Transverse colon (tissue), 4 donors: ENCODE measurements at regions of chr9 and their contacts with region 1.

Region 1: GRCh38 chr9:82829818-82830217 is 233.1 kb downstream of the RASEF start:
- DNase-seq: no peak
- H3K4me3 ChIP-seq: no peak overlapping the region
- H3K27ac ChIP-seq: no peak overlapping the region
- H3K4me1 ChIP-seq: peaks cover 0 to 3% (median 0%) of the 10 kb centered on the region in 4 donors
- H3K27me3 ChIP-seq: no peaks in the 10 kb centered on the region
- CTCF ChIP-seq: no peak
- EP300 ChIP-seq: no peak
- POLR2A ChIP-seq: no peak

Region 2: GRCh38 chr9:82777366-82777765 is 52.5 kb before region 1 on chr9:
- in situ Hi-C with region 1: no loop called
- intact Hi-C with region 1: no loop called
- DNase-seq: no peak
- H3K4me3 ChIP-seq: no peak overlapping the region
- H3K27ac ChIP-seq: no peak overlapping the region
- H3K4me1 ChIP-seq: peaks cover 0 to 8% (median 2%) of the 10 kb centered on the region in 4 donors
- H3K27me3 ChIP-seq: no peaks in the 10 kb centered on the region
- CTCF ChIP-seq: no peak
- EP300 ChIP-seq: no peak
- POLR2A ChIP-seq: no peak

Region 3: DNA sequence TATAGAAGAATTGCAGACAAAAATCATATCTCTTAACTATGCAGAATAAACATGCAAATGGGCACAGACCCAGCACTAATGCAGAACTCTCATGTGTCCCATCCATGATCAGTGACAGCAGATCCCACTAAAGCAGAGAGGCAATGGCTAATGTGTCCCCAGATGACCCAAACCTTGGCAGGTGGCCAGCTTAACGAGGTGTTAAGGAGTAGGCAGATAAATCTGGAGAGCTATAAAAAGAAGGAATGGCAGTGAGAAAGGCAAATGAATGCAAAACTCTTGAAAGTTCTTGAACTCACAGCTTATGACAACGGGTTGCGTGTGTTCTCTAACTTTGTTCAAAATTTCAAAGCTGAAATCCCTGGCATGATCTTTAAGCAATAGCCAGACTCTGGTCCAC is 32.3 kb before region 1 on chr9:
- in situ Hi-C with region 1: no loop called
- intact Hi-C with region 1: no loop called
- DNase-seq: peak; percentile 29
- H3K4me3 ChIP-seq: no peak overlapping the region
- H3K27ac ChIP-seq: no peak overlapping the region
- H3K4me1 ChIP-seq: no peaks in the 10 kb centered on the region
- H3K27me3 ChIP-seq: no peaks in the 10 kb centered on the region
- CTCF ChIP-seq: no peak
- EP300 ChIP-seq: no peak
- POLR2A ChIP-seq: no peak

Region 4: DNA sequence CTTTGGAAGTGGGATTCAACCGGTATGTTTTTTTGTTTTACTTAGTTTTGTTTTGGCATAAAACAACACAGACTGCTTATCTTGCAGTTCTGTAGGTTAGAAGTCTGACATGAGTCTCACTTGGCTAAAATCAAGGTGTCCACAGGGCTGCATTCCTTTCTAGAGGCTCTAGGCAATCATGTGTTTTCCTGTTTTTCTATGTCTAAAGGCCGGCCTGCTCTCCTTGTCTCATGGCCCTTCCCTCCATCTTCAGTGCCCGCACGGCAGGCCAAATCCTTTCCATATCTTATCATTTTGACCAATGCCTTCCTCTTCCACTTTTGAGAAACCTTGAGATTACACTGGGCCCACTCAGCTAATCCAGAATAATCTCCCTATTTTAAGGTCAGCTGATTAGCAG is 32.1 kb after region 1 on chr9:
- in situ Hi-C with region 1: no loop called
- intact Hi-C with region 1: loop called (anchors 1 kb)
- DNase-seq: no peak
- H3K4me3 ChIP-seq: no peak overlapping the region
- H3K27ac ChIP-seq: no peak overlapping the region
- H3K4me1 ChIP-seq: no peaks in the 10 kb centered on the region
- H3K27me3 ChIP-seq: no peaks in the 10 kb centered on the region
- CTCF ChIP-seq: no peak
- EP300 ChIP-seq: no peak
- POLR2A ChIP-seq: no peak

Region 5: DNA sequence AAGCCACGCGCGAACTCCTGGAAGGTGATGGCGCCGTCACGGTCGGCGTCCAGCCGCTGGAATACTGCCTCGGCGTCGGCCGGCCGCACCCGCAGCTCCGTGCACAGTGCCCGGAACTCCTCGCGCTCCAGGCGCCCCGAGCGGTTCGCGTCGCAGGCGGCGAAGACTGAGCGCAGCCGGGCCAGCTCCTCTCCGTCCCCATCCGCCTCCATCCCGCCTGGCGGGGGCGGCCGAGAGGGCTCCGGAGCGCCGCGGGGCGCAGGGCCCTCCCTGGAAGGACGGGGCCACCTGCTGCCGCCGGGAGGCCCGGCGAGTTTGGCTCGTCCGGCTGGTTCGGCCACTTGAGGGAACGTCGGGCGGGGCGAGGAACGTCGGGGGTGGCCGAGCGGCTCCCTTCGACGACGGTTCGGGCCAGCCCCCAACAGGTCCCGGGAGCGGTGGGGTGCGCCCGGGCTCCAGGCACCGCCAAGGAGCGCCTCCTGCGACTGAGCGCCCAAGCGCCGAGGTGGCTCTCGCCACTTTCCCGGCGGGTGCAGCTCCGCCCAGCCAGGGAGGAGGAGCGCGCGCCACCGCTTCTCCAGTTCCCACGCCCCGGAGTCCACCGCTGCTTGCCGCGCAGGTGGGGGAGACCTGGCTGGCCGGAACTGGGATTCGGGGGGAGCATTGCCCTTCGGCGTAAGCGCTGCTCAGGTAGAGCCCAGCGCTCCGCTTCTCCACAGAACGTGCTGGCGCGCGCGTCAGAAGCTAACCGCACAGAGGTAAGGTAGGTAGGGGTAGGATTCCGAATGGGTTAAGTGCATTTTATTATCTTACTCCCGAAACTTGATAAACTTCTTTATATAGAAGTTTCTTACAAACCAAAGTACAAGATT is 233.1 kb after region 1 on chr9 and contains the start of gene RASEF:
- in situ Hi-C with region 1: no loop called
- intact Hi-C with region 1: no loop called
- DNase-seq: peak; percentile 85
- H3K4me3 ChIP-seq: peak within 1 kb of the TSS; percentile 33 to 63 (median 49)
- H3K27ac ChIP-seq: peak within 1 kb of the TSS; percentile 87 to 93 (median 90)
- H3K4me1 ChIP-seq: peaks cover 3 to 24% (median 14%) of the 10 kb centered on the region in 4 donors
- H3K27me3 ChIP-seq: peaks cover 34% of the 10 kb centered on the region
- CTCF ChIP-seq: peak in 2 of 5 experiments; percentile 32 to 56
- EP300 ChIP-seq: no peak
- POLR2A ChIP-seq: peak; percentile 86
- total RNA-seq, gene RASEF: 69.9 to 189 (median 105) TPM